ENCODE measurements at regions of chr12 and their contacts with region 1.

Region 1: DNA sequence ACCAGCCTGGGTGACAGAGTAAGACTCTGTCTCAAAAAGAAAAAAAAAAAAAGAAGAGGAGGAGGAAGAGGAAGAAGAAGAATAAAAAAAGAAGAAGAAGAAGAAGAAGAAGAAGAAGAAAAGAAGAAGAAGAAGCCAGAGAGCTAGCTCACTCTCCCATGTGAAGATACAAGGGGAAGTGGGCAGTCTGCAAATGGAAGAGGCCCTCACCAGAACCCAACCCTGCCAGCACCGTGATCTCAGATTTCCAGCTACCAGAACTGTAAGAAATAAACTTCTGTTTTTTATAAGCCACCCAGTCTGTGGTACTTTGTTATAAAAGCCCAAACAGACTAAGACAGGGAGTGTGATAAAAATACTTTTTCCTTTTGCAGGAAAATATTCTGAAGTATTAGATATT is 130.7 kb downstream of the ETNK1 start:
- DNase-seq: no peak
- ATAC-seq: no peak
- H3K4me3 ChIP-seq: no peak overlapping the region
- H3K27ac ChIP-seq: no peak overlapping the region
- H3K4me1 ChIP-seq: no peaks in the 10 kb centered on the region
- H3K27me3 ChIP-seq: no peaks in the 10 kb centered on the region
- CTCF ChIP-seq: no peak

Region 2: GRCh38 chr12:22797701-22798100 is 42.1 kb after region 1 on chr12:
- CTCF ChIA-PET with region 1: interaction called, 14 read pairs
- POLR2A ChIA-PET with region 1: no interaction called
- in situ Hi-C with region 1: no loop called
- intact Hi-C with region 1: no loop called
- DNase-seq: no peak
- ATAC-seq: no peak
- H3K4me3 ChIP-seq: no peak overlapping the region
- H3K27ac ChIP-seq: no peak overlapping the region
- H3K4me1 ChIP-seq: no peaks in the 10 kb centered on the region
- H3K27me3 ChIP-seq: no peaks in the 10 kb centered on the region
- CTCF ChIP-seq: no peak